ENCODE measurements at regions of chr12 and their contacts with region 1.

Region 1: GRCh38 chr12:79058331-79058730 is 193.8 kb downstream of the SYT1 start:
- DNase-seq: no peak
- H3K4me3 ChIP-seq: no peak overlapping the region
- H3K27ac ChIP-seq: no peak overlapping the region
- H3K4me1 ChIP-seq: no peaks in the 10 kb centered on the region
- H3K27me3 ChIP-seq: no peaks in the 10 kb centered on the region
- CTCF ChIP-seq: no peak

Region 2: GRCh38 chr12:78697817-78698415 is 360.4 kb before region 1 on chr12:
- intact Hi-C with region 1: no loop called
- DNase-seq: no peak
- H3K4me3 ChIP-seq: no peak overlapping the region
- H3K27ac ChIP-seq: no peak overlapping the region
- H3K4me1 ChIP-seq: no peaks in the 10 kb centered on the region
- H3K27me3 ChIP-seq: no peaks in the 10 kb centered on the region
- CTCF ChIP-seq: no peak

Region 3: DNA sequence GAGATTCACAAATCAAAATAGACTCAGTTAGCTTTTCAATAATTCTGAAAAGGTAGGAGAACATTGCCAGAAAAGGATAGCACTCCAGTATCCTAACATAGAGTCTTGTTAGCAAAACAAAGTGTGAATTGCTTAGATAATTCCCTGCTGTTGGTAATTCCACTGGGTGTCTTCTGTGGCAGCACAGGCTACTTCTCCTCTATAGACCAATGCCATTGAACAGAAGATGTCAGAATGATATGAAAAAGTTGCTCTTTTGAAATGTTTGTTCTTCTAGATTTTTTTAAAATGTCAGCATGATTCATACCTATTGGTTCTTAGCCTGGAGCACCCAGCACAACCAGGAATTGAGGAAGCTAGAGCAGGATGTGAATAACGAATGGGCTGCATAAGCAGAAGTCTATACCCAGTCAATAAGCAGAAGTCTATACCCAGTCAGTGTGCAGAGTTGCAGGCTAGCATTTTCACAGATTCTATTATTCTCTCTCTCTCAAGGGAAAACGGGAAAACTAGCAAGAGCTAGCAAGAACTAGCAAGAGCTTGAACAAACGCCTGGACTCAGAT is 80.9 kb before region 1 on chr12:
- intact Hi-C with region 1: no loop called
- DNase-seq: no peak
- H3K4me3 ChIP-seq: no peak overlapping the region
- H3K27ac ChIP-seq: no peak overlapping the region
- H3K4me1 ChIP-seq: no peaks in the 10 kb centered on the region
- H3K27me3 ChIP-seq: no peaks in the 10 kb centered on the region
- CTCF ChIP-seq: no peak

Region 4: GRCh38 chr12:79108962-79109361 is 50.6 kb after region 1 on chr12:
- intact Hi-C with region 1: loop called (anchors 5 kb)
- DNase-seq: no peak
- H3K4me3 ChIP-seq: no peak overlapping the region
- H3K27ac ChIP-seq: no peak overlapping the region
- H3K4me1 ChIP-seq: no peaks in the 10 kb centered on the region
- H3K27me3 ChIP-seq: no peaks in the 10 kb centered on the region
- CTCF ChIP-seq: no peak

Region 5: GRCh38 chr12:79858518-79858917 is 800.2 kb after region 1 on chr12:
- intact Hi-C with region 1: no loop called
- DNase-seq: no peak
- H3K4me3 ChIP-seq: no peak overlapping the region
- H3K27ac ChIP-seq: no peak overlapping the region
- H3K4me1 ChIP-seq: peaks cover 14% of the 10 kb centered on the region
- H3K27me3 ChIP-seq: no peaks in the 10 kb centered on the region
- CTCF ChIP-seq: no peak

Measured in left ventricle myocardium inferior (tissue), 1 donor.